A549 (cell line): ENCODE measurements at regions of chr15 and their contacts with region 1.

Region 1: DNA sequence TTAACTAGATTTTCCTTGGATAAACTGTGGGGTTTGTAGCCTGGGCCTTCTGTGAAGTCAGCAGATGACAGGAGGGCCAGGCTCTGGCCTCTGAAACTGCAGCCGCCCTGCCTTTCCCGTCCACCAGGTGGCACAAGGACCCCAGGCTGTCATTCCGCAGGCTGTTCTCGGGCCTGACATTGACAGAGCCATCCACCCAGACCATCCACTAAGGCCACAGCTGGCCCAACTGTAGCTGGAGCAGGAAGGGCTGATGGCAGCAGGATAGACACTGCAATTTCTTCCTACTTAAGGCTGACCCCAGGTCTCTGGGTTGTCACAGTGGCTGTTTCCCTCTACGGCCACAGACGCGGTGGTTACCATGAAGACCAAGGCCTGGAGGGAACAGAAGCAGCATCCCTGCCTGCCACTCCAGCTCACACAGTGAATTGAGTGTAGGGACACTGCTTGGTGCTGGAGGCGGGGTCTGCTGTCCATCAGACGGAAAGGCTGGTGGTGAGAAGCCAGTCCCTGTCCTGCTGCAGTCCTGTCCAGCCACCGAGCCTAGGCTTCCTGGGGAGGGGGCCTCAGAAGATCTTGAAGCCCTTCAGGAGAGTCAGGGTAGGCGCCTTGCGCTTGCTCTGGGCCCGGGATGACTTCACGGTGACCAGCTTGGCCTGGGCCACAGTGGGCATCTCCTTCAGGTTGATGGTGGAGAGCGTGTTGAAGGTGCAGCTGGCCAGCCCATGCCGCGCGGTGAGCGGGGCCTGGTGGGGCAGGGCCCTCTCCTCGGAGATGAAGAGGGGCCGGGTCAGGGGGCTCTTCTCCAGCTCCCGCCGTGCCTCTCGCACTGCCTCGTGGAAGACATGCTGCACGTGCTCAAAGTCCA is 9.4 kb downstream of the SLC51B start:
- DNase-seq: peak; percentile 79 to 93
- ATAC-seq: peak; percentile 83 to 91
- H3K4me3 ChIP-seq: no peak overlapping the region
- H3K27ac ChIP-seq: peak overlapping the region; percentile 43 to 75
- H3K4me1 ChIP-seq: peaks cover 51% of the 10 kb centered on the region
- CTCF ChIP-seq: peak; percentile 94
- EP300 ChIP-seq: no peak
- POLR2A ChIP-seq: no peak
- RAD21 ChIP-seq: peak; percentile 95 to 98

Region 2: DNA sequence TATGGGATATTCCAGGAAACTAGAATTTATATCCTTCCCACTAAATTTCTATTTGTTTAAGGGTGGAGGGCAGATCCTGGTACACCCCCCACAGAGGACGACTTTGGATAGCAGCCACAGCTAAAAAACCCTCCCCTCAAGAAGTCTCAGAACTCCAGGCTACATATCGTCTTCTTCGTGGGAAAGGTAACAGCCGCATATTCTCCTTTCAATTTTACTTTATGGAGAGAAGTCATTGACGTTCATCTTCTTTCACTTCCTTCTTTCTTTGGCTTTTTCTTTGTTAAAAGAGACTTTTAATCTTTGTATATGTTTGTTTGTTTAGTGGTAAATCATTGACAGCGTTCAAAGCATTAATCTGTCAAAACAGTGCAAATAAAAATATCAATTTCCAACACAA is 630.6 kb before region 1 on chr15:
- CTCF ChIA-PET with region 1: no interaction called
- POLR2A ChIA-PET with region 1: no interaction called
- DNase-seq: no peak
- ATAC-seq: no peak
- H3K4me3 ChIP-seq: no peak overlapping the region
- H3K27ac ChIP-seq: no peak overlapping the region
- H3K4me1 ChIP-seq: peaks cover 15% of the 10 kb centered on the region
- CTCF ChIP-seq: no peak
- EP300 ChIP-seq: no peak
- POLR2A ChIP-seq: no peak
- RAD21 ChIP-seq: no peak

Region 3: DNA sequence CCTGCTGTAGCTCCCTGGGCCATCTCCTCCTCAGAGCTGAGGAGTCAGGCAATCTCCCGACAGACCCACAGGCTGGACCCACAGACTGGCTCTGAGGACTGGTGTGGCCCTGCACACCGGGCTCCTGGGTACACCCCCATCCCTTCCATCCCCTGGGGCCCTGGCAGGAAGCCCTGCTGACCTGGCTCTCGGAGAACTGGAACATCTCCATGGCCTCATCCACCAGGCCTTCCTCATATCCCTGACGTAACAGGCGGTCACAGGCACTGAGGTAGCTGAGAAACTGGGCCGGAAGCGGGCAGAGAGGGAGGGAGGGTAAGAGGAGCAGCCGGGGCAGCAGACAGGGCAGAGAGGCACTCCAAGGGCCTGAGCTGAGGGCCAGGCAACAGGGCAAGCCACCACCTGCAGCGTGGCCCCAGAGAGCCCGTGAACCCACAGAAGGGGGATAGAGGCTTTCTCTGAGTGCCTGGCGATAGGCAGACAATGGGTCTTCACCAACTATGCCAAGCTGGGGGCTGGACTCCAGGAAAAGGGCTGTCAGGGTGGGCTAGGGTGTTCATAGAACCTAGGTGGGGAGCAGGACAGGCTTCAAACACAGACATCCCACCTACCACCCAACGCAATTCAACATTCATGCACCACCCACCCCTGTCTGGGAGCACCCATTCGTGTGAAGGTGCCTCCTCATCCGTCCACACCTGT is 39.9 kb after region 1 on chr15:
- CTCF ChIA-PET with region 1: interaction called, 1,280 read pairs
- POLR2A ChIA-PET with region 1: no interaction called
- DNase-seq: no peak
- ATAC-seq: no peak; a peak in 1 of 6 replicates
- H3K4me3 ChIP-seq: no peak overlapping the region
- H3K27ac ChIP-seq: no peak overlapping the region
- H3K4me1 ChIP-seq: no peaks in the 10 kb centered on the region
- CTCF ChIP-seq: no peak
- EP300 ChIP-seq: no peak
- POLR2A ChIP-seq: no peak
- RAD21 ChIP-seq: no peak